Caco-2 (cell line): ENCODE measurements at regions of chr19 and their contacts with region 1.

Region 1: GRCh38 chr19:7722231-7722651 is 9.7 kb downstream of the CLEC4G start:
- DNase-seq: no peak
- H3K4me3 ChIP-seq: no peak overlapping the region
- H3K4me3 Mint-ChIP-seq: no peak overlapping the region
- H3K27ac Mint-ChIP-seq: no peak overlapping the region
- H3K4me1 ChIP-seq: no peaks in the 10 kb centered on the region
- H3K4me1 Mint-ChIP-seq: no peaks in the 10 kb centered on the region
- H3K27me3 ChIP-seq: no peaks in the 10 kb centered on the region
- H3K27me3 Mint-ChIP-seq: peaks cover 4% of the 10 kb centered on the region
- CTCF ChIP-seq: no peak

Region 2: GRCh38 chr19:6654347-6655310 is 1067.6 kb before region 1 on chr19:
- CTCF ChIA-PET with region 1: no interaction called
- POLR2A ChIA-PET with region 1: interaction called, 11 read pairs
- intact Hi-C with region 1: no loop called
- DNase-seq: no peak
- H3K4me3 ChIP-seq: no peak overlapping the region
- H3K4me3 Mint-ChIP-seq: no peak overlapping the region
- H3K27ac Mint-ChIP-seq: no peak overlapping the region
- H3K4me1 ChIP-seq: peaks cover 10% of the 10 kb centered on the region
- H3K4me1 Mint-ChIP-seq: peaks cover 17% of the 10 kb centered on the region
- H3K27me3 ChIP-seq: no peaks in the 10 kb centered on the region
- H3K27me3 Mint-ChIP-seq: no peaks in the 10 kb centered on the region
- CTCF ChIP-seq: no peak

Region 3: GRCh38 chr19:7605490-7606222 is 116.6 kb before region 1 on chr19:
- CTCF ChIA-PET with region 1: no interaction called
- POLR2A ChIA-PET with region 1: no interaction called
- intact Hi-C with region 1: no loop called
- DNase-seq: peak; percentile 60 to 79
- H3K4me3 ChIP-seq: no peak overlapping the region
- H3K4me3 Mint-ChIP-seq: no peak overlapping the region
- H3K27ac Mint-ChIP-seq: no peak overlapping the region
- H3K4me1 ChIP-seq: no peaks in the 10 kb centered on the region
- H3K4me1 Mint-ChIP-seq: no peaks in the 10 kb centered on the region
- H3K27me3 ChIP-seq: no peaks in the 10 kb centered on the region
- H3K27me3 Mint-ChIP-seq: no peaks in the 10 kb centered on the region
- CTCF ChIP-seq: no peak

Region 4: DNA sequence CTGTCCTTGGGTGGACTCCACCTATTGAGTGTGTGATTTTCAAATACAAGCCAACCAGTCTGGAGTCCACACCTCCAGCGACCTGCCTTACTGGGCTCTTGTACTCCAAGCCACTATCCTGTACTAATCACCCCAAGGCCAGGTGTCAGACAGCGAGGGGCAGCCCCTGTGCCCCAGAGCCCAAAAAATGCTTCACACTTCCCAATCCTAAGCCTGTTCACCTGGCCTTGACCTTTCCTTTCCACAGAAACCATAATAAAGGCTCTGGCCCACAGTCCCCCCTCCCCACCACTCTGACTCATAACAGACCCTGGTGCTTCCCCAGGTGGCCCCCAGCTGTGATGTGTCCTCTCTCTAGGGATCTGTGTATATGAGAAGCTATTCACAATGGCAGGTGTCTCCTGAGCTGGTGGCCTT is 21.2 kb after region 1 on chr19:
- CTCF ChIA-PET with region 1: no interaction called
- POLR2A ChIA-PET with region 1: no interaction called
- intact Hi-C with region 1: no loop called
- DNase-seq: no peak
- H3K4me3 ChIP-seq: no peak overlapping the region
- H3K4me3 Mint-ChIP-seq: no peak overlapping the region
- H3K27ac Mint-ChIP-seq: no peak overlapping the region
- H3K4me1 ChIP-seq: no peaks in the 10 kb centered on the region
- H3K4me1 Mint-ChIP-seq: no peaks in the 10 kb centered on the region
- H3K27me3 ChIP-seq: no peaks in the 10 kb centered on the region
- H3K27me3 Mint-ChIP-seq: peaks cover 15% of the 10 kb centered on the region
- CTCF ChIP-seq: no peak

Region 5: GRCh38 chr19:7829561-7830271 is 107.5 kb after region 1 on chr19 and contains the start of gene EVI5L:
- CTCF ChIA-PET with region 1: no interaction called
- POLR2A ChIA-PET with region 1: no interaction called
- intact Hi-C with region 1: no loop called
- DNase-seq: peak; percentile 99
- H3K4me3 ChIP-seq: peak within 1 kb of the TSS; percentile 64
- H3K4me3 Mint-ChIP-seq: peak within 1 kb of the TSS; percentile 90
- H3K27ac Mint-ChIP-seq: peak within 1 kb of the TSS; percentile 63
- H3K4me1 ChIP-seq: no peaks in the 10 kb centered on the region; the same call in 1 of the 2 replicates
- H3K4me1 Mint-ChIP-seq: peaks cover 7% of the 10 kb centered on the region
- H3K27me3 ChIP-seq: no peaks in the 10 kb centered on the region
- H3K27me3 Mint-ChIP-seq: peaks cover 8% of the 10 kb centered on the region
- CTCF ChIP-seq: no peak
- total RNA-seq, gene EVI5L: 6.5 and 9.8 TPM in 2 replicates